HEK293T (cell line): ENCODE measurements at regions of chr1 and their contacts with region 1.

Region 1: GRCh38 chr1:207997486-207998268 is 86.8 kb upstream of the CD34 start:
- DNase-seq: peak; percentile 84

Region 2: DNA sequence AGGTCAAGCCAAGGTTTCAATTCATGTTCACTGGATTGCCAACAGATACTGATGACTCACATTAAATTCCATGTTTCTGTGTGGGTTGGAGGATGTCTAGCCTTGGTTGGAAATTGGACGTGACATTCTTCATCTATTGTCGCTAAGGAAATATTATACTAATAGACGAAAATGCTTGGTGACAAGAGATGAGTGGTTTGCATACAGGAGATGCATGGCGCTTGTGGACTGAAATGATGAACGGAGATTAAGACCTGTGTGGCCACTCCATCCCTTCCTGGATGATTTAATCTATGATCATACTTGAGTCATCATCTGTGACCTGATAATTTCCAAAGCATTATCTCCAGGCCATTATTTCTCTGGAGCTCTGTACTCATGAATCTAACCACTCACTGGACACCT is 10.3 kb after region 1 on chr1:
- CTCF ChIA-PET with region 1: interaction called, 11 read pairs
- POLR2A ChIA-PET with region 1: no interaction called
- DNase-seq: no peak

Region 3: DNA sequence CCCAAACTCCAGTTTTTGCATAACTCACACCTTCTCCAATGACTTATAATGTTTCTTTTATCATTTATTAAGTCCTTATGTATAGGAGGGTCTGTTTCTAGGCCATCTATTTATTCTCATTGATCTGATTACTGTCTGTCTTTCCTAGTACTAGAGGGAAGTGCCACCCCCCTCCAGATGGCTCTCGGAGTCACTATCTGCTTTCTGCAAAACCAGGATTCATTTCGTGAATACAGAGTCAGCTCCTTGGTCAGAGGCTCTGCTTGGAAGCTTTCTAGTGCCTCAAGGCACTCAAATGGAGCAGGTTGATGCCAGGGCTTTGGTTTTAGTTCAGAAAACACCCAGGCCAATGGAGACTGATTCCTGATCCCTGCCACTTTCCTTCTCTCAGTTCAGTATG is 15.5 kb after region 1 on chr1:
- CTCF ChIA-PET with region 1: interaction called, 11 read pairs
- POLR2A ChIA-PET with region 1: no interaction called
- DNase-seq: no peak